ENCODE measurements at regions of chr6 and their contacts with region 1.

Region 1: DNA sequence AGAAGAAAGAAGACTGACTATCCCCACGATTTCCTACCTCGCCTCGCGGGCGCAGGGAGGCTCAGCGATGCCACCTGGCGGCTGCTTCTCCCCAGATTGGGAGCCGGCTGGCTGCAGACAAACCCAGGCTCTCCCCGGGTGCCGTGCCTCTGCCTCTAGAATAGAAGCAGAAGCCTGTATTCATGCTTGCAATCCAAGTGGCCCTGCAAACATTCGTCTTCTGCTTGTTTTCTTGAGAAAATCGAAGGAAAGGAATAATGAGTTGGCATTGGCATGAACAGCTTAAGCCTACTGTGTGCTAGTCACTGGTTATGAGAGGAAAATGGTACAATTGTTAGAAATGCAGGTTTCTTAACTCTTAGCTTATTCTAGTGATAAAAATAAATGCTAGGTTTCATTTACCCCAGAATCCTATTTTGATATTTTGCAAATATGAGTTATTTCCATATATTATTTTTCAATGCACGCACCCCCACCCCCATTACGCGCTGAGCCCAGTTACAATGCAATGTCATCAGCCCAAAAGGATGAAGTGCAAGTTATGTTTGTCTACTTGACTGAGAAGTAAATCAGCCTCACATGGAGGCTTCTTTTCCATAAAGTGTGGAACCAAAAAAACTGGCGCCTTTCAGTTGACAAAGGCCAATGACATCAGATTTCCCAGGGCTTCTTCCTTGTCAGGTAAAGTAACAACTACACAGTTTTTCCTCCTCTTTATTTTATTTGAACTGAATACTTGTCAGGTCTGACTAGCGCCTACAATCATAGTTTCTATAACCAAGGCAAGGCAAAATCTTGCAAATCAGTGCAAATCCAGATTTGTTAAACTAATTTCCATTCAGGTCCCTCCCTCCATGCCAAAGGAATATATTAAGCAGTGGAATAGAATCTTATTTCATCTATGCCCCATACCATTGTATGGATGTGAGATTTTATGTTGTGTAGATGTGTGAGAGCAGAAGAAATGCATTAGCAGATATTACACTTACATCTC is 3.9 kb upstream of the SOX4 start:
- DNase-seq: peak; percentile 87
- ATAC-seq: peak; percentile 63
- H3K4me3 Mint-ChIP-seq: peak overlapping the region; percentile 91
- H3K27ac Mint-ChIP-seq: peak overlapping the region; percentile 3
- H3K4me1 Mint-ChIP-seq: peaks cover 14% of the 10 kb centered on the region
- H3K27me3 Mint-ChIP-seq: peaks cover 42% of the 10 kb centered on the region

Region 2: DNA sequence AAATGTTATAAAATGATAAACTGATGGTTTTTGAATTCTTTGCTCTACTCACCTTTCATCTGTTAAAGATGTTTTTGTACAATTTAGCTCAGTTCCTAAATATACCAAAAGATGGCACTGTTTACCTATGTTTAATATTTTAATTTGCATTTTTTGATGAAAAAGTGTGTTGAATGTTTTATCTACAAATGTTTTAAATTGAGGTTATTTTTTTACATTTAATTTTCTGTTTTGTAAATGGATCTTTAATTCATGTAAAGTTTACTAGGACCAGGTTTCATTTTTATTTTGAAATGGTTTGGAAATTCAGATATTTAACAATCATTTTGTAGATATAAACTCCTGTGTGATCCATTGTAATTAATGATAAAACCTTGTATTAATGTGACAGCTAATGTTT is 1025.4 kb before region 1 on chr6:
- POLR2A ChIA-PET with region 1: interaction called, 12 read pairs
- DNase-seq: no peak
- ATAC-seq: no peak
- H3K4me3 Mint-ChIP-seq: peak overlapping the region; percentile 48
- H3K27ac Mint-ChIP-seq: no peak overlapping the region
- H3K4me1 Mint-ChIP-seq: peaks cover 12% of the 10 kb centered on the region
- H3K27me3 Mint-ChIP-seq: no peaks in the 10 kb centered on the region

Region 3: DNA sequence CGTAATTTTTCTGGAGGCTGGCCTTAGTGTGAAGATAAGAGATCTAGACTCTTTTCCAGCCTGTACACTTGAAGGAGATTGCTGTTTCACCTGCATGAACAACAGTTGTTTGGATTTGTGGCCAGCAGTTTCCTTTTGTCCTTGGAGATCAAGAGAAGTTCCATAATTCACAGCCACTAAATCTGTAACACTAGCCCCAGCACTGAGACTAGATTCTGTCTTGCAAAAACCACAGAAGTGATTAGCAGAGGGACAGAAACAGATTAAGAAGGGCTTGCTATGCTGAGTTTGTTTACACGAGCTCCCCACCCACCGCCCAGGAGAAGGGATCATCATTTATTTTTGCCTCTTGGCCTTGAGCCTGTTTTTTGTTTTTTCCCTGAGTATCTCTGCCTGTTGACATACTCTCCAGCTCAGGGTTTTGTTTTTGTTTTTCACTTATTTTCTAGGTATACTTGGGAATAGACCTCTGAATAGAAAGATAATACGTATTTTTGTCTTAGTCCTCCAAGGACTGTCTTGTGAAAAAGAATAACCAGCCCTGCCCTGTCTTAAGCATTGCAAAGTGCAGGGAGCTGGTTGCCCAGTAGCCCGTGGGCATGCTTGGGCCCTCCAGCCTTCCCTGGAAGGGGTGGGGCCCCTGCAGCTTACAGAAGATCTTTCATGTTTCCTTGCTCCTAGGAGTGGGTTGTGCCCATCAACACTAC is 89.2 kb before region 1 on chr6:
- POLR2A ChIA-PET with region 1: no interaction called
- DNase-seq: no peak
- ATAC-seq: no peak
- H3K4me3 Mint-ChIP-seq: no peak overlapping the region
- H3K27ac Mint-ChIP-seq: no peak overlapping the region
- H3K4me1 Mint-ChIP-seq: no peaks in the 10 kb centered on the region
- H3K27me3 Mint-ChIP-seq: peaks cover 4% of the 10 kb centered on the region

Region 4: GRCh38 chr6:21556968-21557721 is 32.5 kb before region 1 on chr6:
- POLR2A ChIA-PET with region 1: no interaction called
- DNase-seq: no peak
- ATAC-seq: no peak
- H3K4me3 Mint-ChIP-seq: no peak overlapping the region
- H3K27ac Mint-ChIP-seq: no peak overlapping the region
- H3K4me1 Mint-ChIP-seq: no peaks in the 10 kb centered on the region
- H3K27me3 Mint-ChIP-seq: no peaks in the 10 kb centered on the region